ENCODE measurements at regions of chr22 and their contacts with region 1.

Region 1: GRCh38 chr22:40044102-40044869 is 49.5 kb downstream of the FAM83F start:
- DNase-seq: peak; percentile 99
- H3K4me3 Mint-ChIP-seq: peak overlapping the region; percentile 92
- H3K27ac Mint-ChIP-seq: peak overlapping the region; percentile 97
- H3K4me1 Mint-ChIP-seq: peaks cover 26% of the 10 kb centered on the region
- H3K27me3 Mint-ChIP-seq: peaks cover 7% of the 10 kb centered on the region

Region 2: DNA sequence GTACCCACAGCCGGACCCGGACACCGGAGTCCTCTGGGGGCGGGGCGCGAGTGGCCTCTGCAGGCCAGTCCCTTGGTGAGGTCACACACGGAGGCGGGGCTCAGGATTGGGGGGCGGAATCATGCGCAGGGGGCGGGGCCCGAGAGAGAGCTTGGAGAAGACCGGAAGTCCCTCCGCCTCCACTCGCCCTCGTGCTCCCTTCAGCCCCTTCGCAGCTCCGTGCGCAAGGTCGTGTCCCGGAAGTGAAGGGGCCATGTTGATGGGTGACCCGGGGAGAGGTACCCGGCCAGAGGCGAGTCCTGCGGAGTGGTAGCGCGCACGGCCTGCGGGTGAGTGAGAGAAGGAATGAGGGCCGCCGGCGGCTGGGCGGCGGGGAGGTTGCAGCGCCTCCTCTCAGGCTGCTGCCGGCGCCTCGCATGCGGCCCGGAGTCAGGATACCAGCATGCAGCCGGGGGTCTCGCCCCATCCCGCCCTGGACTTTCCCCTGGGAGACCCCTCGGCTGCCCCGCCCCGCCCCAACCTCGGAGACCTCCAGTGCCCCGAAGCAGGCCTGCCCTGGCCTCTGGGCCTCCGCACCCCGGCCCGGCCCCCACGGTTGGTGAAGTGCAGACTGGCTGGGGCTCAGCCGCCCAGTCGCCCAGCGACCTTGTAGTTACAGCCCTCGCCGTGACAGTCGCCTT is 542.0 kb before region 1 on chr22 and contains the start of gene MIEF1:
- CTCF ChIA-PET with region 1: interaction called, 3 read pairs
- POLR2A ChIA-PET with region 1: interaction called, 12 read pairs
- DNase-seq: peak; percentile 94
- H3K4me3 Mint-ChIP-seq: peak within 1 kb of the TSS; percentile 91
- H3K27ac Mint-ChIP-seq: peak within 1 kb of the TSS; percentile 92
- H3K4me1 Mint-ChIP-seq: peaks cover 41% of the 10 kb centered on the region
- H3K27me3 Mint-ChIP-seq: peaks cover 10% of the 10 kb centered on the region
- total RNA-seq, gene MIEF1: 32.4 to 32.6 TPM

Region 3: GRCh38 chr22:39917776-39918495 is 126.3 kb before region 1 on chr22:
- CTCF ChIA-PET with region 1: interaction called, 3 read pairs
- POLR2A ChIA-PET with region 1: interaction called, 16 read pairs
- DNase-seq: no peak
- H3K4me3 Mint-ChIP-seq: peak overlapping the region; percentile 68
- H3K27ac Mint-ChIP-seq: peak overlapping the region; percentile 85
- H3K4me1 Mint-ChIP-seq: peaks cover 90% of the 10 kb centered on the region
- H3K27me3 Mint-ChIP-seq: no peaks in the 10 kb centered on the region

Region 4: DNA sequence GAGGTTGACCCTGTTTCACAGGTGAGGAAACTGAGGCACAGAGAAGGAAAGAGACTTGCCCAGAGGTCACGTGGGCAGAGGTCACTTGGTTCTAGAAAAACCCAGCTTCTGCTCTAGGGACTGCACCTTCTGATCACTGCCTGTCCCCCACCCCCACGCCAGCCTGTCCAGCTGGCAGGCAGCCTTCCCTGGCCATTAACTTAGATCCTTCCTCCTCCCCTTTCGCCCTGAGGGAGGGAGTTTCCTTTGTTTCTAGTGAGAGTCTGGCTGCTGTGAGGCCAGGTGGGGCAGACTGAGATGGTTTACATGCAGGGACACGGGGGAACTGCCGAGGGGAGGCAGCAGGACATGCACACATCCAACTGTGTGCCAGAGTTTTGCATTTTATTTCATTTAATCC is 46.3 kb before region 1 on chr22:
- CTCF ChIA-PET with region 1: no interaction called
- POLR2A ChIA-PET with region 1: no interaction called
- DNase-seq: no peak
- H3K4me3 Mint-ChIP-seq: no peak overlapping the region
- H3K27ac Mint-ChIP-seq: no peak overlapping the region
- H3K4me1 Mint-ChIP-seq: peaks cover 7% of the 10 kb centered on the region
- H3K27me3 Mint-ChIP-seq: peaks cover 53% of the 10 kb centered on the region

Region 5: GRCh38 chr22:40094485-40094884 is 50.2 kb after region 1 on chr22:
- CTCF ChIA-PET with region 1: interaction called, 3 read pairs
- POLR2A ChIA-PET with region 1: interaction called, 23 read pairs
- DNase-seq: no peak
- H3K4me3 Mint-ChIP-seq: peak overlapping the region; percentile 57
- H3K27ac Mint-ChIP-seq: peak overlapping the region; percentile 69
- H3K4me1 Mint-ChIP-seq: peaks cover 37% of the 10 kb centered on the region
- H3K27me3 Mint-ChIP-seq: no peaks in the 10 kb centered on the region

Region 6: GRCh38 chr22:40193429-40194421 is 149.4 kb after region 1 on chr22:
- CTCF ChIA-PET with region 1: interaction called, 4 read pairs
- POLR2A ChIA-PET with region 1: interaction called, 15 read pairs
- DNase-seq: no peak
- H3K4me3 Mint-ChIP-seq: no peak overlapping the region
- H3K27ac Mint-ChIP-seq: no peak overlapping the region
- H3K4me1 Mint-ChIP-seq: peaks cover 42% of the 10 kb centered on the region
- H3K27me3 Mint-ChIP-seq: no peaks in the 10 kb centered on the region

Region 7: DNA sequence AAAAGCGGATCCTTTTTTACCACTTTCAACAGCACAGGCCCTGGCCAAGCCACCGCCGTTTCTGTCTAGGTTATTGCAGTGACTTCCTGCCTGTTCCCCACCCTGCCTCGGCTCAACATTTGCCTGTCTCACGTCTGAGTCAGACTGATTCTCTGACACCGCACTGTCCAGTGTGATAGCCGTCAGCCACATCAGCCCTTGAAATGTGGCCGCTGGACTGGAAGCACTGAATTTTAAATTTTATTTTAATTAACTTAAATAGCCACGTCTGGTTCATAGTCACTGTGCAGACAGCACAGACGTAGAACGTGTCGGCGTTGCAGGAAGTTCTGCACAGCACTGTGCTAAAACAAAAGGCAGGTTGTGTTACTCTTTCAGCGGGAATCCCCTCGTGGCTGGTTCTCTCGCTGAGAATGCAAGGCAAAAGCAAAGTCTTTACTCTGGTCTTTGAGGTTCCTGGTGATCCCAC is 245.7 kb after region 1 on chr22:
- CTCF ChIA-PET with region 1: no interaction called
- POLR2A ChIA-PET with region 1: interaction called, 14 read pairs
- DNase-seq: peak; percentile 75
- H3K4me3 Mint-ChIP-seq: peak overlapping the region; percentile 40
- H3K27ac Mint-ChIP-seq: peak overlapping the region; percentile 89
- H3K4me1 Mint-ChIP-seq: peaks cover 61% of the 10 kb centered on the region
- H3K27me3 Mint-ChIP-seq: no peaks in the 10 kb centered on the region

Measured in activated CD4-positive, alpha-beta memory T cell treated with anti-CD3 and anti-CD28 coated beads, Interleukin-2, amount 10 ng/mL, durations not matched to agents 7 days and 5 days (primary cell).